ENCODE measurements at regions of chr3 and their contacts with region 1.

Region 1: GRCh38 chr3:97793420-97794019 is 28.3 kb upstream of the CRYBG3 start:
- DNase-seq: no peak
- ATAC-seq: peak; percentile 71
- H3K4me3 ChIP-seq: no peak overlapping the region
- H3K27ac ChIP-seq: no peak overlapping the region
- H3K4me1 ChIP-seq: no peaks in the 10 kb centered on the region
- H3K27me3 ChIP-seq: no peaks in the 10 kb centered on the region
- CTCF ChIP-seq: peak; percentile 81

Region 2: GRCh38 chr3:97559388-97559787 is 234.1 kb before region 1 on chr3:
- intact Hi-C with region 1: no loop called
- DNase-seq: no peak
- ATAC-seq: no peak
- H3K4me3 ChIP-seq: no peak overlapping the region
- H3K27ac ChIP-seq: no peak overlapping the region
- H3K4me1 ChIP-seq: no peaks in the 10 kb centered on the region
- H3K27me3 ChIP-seq: no peaks in the 10 kb centered on the region
- CTCF ChIP-seq: no peak

Region 3: DNA sequence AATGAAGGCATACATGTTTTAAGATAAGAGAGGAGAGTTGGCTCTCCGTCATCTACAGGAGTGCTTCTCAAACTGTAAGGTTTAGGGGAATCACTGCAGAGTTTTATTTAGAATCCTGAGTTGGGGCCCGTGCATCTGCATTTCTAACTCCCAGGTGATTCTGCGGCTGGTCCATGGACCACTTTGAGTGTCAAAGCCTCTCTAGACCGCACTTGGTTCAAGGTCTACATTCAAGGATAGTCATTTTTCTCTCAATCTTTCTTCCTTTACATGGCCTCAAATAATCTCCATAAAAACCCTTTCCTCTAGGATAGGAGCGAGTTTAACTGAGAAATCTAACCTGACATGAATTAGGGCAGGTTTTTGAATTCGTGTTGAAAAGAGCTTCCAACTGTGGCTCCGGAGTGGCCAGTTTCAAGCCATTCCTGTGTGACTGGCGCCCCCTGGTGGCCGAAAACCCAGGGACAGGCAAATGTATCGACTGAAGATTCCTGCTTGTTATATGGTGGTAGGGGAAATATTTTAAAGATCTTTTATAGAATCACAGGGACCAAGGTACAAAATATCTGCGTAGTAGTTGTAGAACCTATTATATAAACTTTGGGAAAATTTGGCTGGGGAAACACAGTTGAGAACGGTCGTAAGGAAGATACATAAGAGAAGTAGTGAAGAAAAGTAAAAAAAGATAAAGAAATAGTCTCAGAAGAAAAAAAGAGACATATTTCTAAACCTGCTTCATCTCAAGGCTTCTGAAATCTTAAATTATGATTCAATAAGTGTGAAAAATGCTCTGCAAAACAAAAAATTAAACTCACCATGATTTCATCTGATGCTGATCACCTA is 229.7 kb after region 1 on chr3:
- intact Hi-C with region 1: loop called (anchors 5 kb)
- DNase-seq: peak; percentile 93
- ATAC-seq: peak; percentile 91
- H3K4me3 ChIP-seq: no peak overlapping the region
- H3K27ac ChIP-seq: no peak overlapping the region
- H3K4me1 ChIP-seq: no peaks in the 10 kb centered on the region
- H3K27me3 ChIP-seq: no peaks in the 10 kb centered on the region
- CTCF ChIP-seq: peak; percentile 98

Measured in upper lobe of right lung (tissue), 1 donor.